Posterior vena cava (tissue), 2 donors: ENCODE measurements at regions of chr3 and their contacts with region 1.

Region 1: GRCh38 chr3:11619946-11620657 is 23.6 kb downstream of the VGLL4 start:
- DNase-seq: no peak

Region 2: GRCh38 chr3:13009132-13009960 is 1389.2 kb after region 1 on chr3:
- intact Hi-C with region 1: loop called in 1 of 2 experiments (anchors 5 kb)
- DNase-seq: peak; percentile 93